Activated naive CD4-positive, alpha-beta T cell treated with anti-CD3 and anti-CD28 coated beads for 36 hours (primary cell): ENCODE measurements at regions of chr9 and their contacts with region 1.

Region 1: DNA sequence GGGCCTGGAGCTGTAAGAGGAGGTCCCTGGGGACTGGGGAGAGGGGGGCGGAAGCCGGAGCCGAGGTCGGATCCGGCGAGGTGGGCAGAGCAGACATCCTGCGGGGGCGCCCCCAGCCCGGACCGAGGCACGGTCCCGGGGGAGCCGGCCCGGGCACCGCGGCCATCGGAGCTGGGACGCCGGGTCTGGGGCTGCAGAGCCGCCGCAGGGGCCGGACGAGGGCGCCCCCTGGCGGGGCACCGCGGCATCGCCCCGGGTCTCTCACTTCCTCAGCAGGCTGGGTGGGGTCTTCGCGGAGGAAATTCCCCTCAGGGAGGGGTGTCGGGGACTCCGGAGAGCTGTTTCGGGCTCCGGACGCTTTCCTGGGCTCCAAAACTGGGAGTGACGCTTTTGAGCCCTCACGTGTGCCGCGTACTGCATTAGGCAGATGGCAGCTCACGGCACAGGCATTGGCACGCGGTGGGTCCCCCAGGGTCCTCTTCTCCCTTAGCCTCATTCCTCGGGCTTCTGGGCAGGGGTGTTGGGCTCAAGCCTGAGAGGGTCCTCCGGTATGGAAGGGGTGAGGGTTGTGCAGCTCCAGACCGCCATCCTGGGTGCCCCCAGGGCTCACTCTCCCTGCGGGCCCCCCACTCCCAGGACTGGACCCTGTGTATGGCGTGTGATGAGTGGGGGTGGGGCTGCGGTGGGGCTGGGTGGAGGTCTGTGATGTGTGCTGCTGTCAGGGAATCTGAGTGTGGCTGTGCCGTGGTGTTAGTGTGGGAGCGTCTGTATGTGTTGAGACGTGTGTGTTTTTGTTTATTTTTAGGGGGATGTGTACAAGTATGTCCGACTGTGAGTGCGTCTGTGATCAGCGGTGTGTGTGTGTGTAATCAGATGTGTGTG is 29.6 kb downstream of the LHX2 start:
- DNase-seq: peak; percentile 50
- H3K4me3 Mint-ChIP-seq: peak overlapping the region; percentile 17
- H3K27ac Mint-ChIP-seq: no peak overlapping the region
- H3K4me1 Mint-ChIP-seq: peaks cover 9% of the 10 kb centered on the region
- H3K27me3 Mint-ChIP-seq: peaks cover 67% of the 10 kb centered on the region

Region 2: DNA sequence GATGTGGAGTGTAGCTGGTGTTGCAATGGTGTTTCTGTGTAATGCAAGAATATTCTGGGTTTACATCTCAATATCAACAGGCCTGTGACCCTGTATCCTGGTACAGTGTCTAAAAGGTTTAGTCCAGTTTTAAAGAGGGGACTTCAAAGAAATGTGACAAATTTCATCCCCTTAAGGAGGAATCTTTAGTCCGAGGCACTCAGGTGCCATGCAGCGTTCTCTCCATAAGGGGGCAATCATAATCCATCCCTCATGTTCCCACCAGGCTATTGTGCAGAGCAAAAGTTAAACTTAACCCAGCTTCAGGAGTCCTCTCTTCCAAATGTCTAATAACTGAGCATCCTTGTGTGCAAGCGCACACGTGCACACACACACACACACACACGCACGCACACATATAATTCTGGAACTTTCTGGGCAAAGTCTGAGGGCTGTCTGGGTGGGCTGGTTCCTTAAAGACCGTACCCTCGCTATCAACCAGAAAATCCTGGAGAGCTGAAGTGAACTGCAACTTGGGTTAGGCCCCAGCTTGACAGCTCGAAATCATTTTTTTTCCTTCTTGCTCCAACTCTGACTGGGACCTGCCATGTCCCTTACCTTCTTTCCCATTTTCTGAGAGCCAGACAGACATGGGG is 639.2 kb before region 1 on chr9:
- CTCF ChIA-PET with region 1: interaction called, 3 read pairs
- intact Hi-C with region 1: loop called (anchors 5 kb)
- DNase-seq: peak; percentile 28
- H3K4me3 Mint-ChIP-seq: no peak overlapping the region
- H3K27ac Mint-ChIP-seq: no peak overlapping the region
- H3K4me1 Mint-ChIP-seq: peaks cover 7% of the 10 kb centered on the region
- H3K27me3 Mint-ChIP-seq: no peaks in the 10 kb centered on the region

Region 3: GRCh38 chr9:123749580-123750202 is 291.5 kb before region 1 on chr9:
- CTCF ChIA-PET with region 1: interaction called, 4 read pairs
- intact Hi-C with region 1: loop called (anchors 1 kb)
- DNase-seq: peak; percentile 43
- H3K4me3 Mint-ChIP-seq: no peak overlapping the region
- H3K27ac Mint-ChIP-seq: no peak overlapping the region
- H3K4me1 Mint-ChIP-seq: peaks cover 21% of the 10 kb centered on the region
- H3K27me3 Mint-ChIP-seq: no peaks in the 10 kb centered on the region

Region 4: GRCh38 chr9:123960366-123960765 is 80.8 kb before region 1 on chr9:
- CTCF ChIA-PET with region 1: interaction called, 17 read pairs
- intact Hi-C with region 1: loop called (anchors 2 kb)
- DNase-seq: no peak
- H3K4me3 Mint-ChIP-seq: no peak overlapping the region
- H3K27ac Mint-ChIP-seq: no peak overlapping the region
- H3K4me1 Mint-ChIP-seq: peaks cover 3% of the 10 kb centered on the region
- H3K27me3 Mint-ChIP-seq: peaks cover 21% of the 10 kb centered on the region